A673 (cell line): ENCODE measurements at regions of chr1 and their contacts with region 1.

Region 1: DNA sequence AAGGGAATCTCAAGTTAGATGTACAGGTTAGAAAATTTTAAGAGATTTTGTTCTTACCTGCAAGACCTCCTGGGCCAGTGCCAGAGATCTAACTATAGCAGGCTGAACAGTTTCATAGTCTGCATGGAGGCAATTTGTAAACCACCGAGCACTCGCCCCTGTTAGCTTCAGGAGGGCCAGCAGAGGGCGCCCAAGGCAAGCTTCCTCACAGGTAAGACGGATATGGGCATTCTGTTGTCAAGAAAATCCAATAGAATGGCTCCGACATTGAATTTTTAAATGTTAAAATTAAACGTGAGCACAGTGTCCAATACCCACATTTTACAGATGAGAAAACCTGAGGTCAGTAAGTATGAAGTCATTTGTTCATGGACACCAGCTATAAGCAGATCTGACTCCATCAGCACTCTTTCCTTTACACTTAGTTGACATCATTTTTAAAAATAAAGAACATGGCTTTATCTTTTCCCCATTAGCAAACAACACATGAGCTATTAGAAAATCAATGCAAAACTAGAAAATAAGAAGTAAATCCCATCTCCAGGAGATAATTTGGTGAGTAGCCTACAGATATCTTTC is 2.2 kb downstream of the REG4 start:
- DNase-seq: peak; percentile 71
- H3K4me3 ChIP-seq: no peak overlapping the region
- H3K27ac ChIP-seq: no peak overlapping the region
- H3K4me1 ChIP-seq: no peaks in the 10 kb centered on the region
- H3K27me3 ChIP-seq: no peaks in the 10 kb centered on the region
- CTCF ChIP-seq: peak; percentile 98

Region 2: GRCh38 chr1:119797162-119797561 is 11.9 kb before region 1 on chr1:
- CTCF ChIA-PET with region 1: no interaction called
- POLR2A ChIA-PET with region 1: no interaction called
- intact Hi-C with region 1: loop called (anchors 1 kb)
- DNase-seq: no peak
- H3K4me3 ChIP-seq: no peak overlapping the region
- H3K27ac ChIP-seq: no peak overlapping the region
- H3K4me1 ChIP-seq: no peaks in the 10 kb centered on the region
- H3K27me3 ChIP-seq: no peaks in the 10 kb centered on the region
- CTCF ChIP-seq: no peak

Region 3: DNA sequence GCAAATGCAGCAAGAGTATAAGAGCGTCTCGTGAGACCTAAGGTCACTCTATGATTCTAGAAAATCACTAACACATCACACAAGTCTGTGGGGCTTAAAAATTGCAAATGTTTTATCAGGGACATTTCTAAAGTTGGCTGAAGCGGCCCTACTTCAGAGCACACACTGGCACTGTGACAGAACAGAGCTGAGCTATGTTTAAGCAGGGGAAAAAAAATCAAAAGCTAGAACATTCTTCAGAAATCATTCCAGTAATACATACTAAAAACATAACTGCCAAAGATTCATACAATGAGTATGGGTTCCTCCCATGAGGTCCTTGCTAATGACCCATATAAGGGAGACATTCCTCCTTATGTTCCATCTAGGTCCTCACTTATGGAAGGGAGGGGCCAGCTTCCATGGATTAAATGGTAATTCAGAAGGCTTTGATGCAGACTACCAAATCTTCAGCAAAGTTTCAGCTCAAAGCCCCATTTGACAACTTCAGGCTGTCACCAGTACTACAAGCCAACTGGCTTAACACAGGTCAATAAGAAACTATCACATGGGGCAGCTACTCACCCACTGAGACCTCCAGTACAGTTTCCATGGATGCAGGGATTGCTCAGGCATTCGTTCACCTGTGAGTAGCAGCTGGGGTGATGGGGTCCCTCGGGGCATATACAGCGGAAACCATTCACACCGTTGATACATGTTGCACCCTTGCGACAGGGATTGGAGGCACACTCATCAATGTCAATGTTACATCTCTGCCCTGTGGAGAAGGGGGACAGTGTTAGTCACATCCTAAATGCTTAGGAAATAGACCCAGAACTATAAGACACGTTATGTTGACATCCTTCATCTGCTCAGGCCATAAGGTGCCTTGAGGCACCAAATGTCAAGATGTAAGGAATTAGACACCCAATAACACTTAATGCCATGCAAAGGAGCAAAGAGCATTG is 145.7 kb after region 1 on chr1:
- CTCF ChIA-PET with region 1: no interaction called
- POLR2A ChIA-PET with region 1: no interaction called
- intact Hi-C with region 1: no loop called
- DNase-seq: no peak
- H3K4me3 ChIP-seq: no peak overlapping the region
- H3K27ac ChIP-seq: no peak overlapping the region
- H3K4me1 ChIP-seq: no peaks in the 10 kb centered on the region
- H3K27me3 ChIP-seq: no peaks in the 10 kb centered on the region
- CTCF ChIP-seq: no peak